K562 (cell line): ENCODE measurements at regions of chr16 and their contacts with region 1.

Region 1: GRCh38 chr16:66894948-66895688 is 14.8 kb downstream of the PDP2 start:
- DNase-seq: peak; percentile 57 to 88 (median 64)
- ATAC-seq: peak; percentile 87
- H3K4me3 ChIP-seq: no peak overlapping the region
- H3K27ac ChIP-seq: no peak overlapping the region
- H3K4me1 ChIP-seq: peaks cover 14 to 23% of the 10 kb centered on the region in 2 experiments
- H3K27me3 ChIP-seq: no peaks in the 10 kb centered on the region
- CTCF ChIP-seq: peak; percentile 95 to 99 (median 96)
- EP300 ChIP-seq: no peak
- POLR2A ChIP-seq: no peak
- RAD21 ChIP-seq: peak; percentile 96 to 98

Region 2: DNA sequence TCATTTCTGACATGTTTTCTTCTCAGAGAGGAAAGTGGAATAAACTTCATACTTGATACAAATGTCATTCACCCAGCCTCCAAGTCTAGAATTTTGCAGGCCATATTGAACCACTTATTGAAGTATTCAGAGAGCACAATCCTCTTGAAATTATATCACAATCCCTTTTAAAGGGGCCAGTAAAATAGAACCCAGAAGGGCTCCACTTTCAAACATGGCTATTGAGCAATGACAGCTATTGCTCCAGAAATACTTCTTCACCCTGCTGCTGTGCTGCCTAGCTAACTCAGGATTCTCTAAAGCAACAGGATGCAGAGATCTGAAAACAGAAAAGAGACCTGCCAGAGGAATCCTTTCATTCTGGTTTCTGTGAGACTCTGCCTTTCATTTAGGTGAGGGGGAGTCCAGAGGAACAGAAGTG is 803.6 kb before region 1 on chr16:
- CTCF ChIA-PET with region 1: no interaction called
- POLR2A ChIA-PET with region 1: no interaction called
- in situ Hi-C with region 1: no loop called
- intact Hi-C with region 1: no loop called
- DNase-seq: no peak
- ATAC-seq: no peak
- H3K4me3 ChIP-seq: no peak overlapping the region
- H3K27ac ChIP-seq: no peak overlapping the region
- H3K4me1 ChIP-seq: no peaks in the 10 kb centered on the region
- H3K27me3 ChIP-seq: no peaks in the 10 kb centered on the region
- CTCF ChIP-seq: no peak
- EP300 ChIP-seq: no peak
- POLR2A ChIP-seq: no peak
- RAD21 ChIP-seq: no peak

Region 3: DNA sequence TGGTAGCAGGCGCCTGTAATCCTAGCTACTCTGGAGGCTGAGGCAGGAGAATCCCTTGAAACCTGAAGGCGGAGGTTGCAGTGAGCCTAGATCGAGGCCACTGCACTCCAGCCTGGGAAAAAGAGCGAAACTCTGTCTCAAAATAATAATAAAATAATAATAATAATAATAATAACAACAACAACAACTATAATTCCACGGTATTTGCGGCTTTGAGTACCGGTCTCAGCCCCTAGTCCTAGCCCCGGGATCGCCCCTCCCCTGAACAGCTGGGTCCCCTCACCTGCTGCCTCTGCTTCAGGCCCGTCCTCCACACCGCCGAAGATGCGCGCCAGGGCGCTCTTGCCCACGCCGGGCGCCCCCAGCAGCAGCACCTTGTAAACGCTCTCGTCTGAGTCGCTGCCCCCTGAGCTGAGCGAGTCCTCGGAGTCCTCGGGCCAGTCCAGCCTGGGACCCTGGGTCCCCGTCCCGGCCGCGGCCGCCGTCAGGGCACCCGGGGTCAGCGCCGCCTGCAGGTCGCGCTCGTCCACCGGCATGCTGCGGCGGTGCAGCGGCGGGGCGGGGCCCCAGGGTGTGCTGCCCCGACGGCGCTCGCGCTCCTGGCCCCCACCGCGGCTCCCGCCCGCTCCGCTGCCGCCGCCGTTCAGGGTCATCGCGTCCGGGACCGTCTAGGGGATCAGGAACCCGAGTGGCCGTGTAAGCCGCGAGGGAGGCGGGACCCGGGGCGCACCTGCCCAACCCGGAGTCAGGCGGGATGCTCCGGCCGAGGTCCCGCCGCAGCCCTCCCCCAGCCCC is 29.6 kb after region 1 on chr16:
- CTCF ChIA-PET with region 1: interaction called, 41 read pairs
- POLR2A ChIA-PET with region 1: interaction called, 15 read pairs
- in situ Hi-C with region 1: no loop called
- intact Hi-C with region 1: loop called (anchors 1 kb)
- DNase-seq: peak; percentile 62 to 92 (median 88)
- ATAC-seq: peak; percentile 93
- H3K4me3 ChIP-seq: peak overlapping the region; percentile 32
- H3K27ac ChIP-seq: no peak overlapping the region
- H3K4me1 ChIP-seq: peaks cover 0 to 31% of the 10 kb centered on the region in 2 experiments; a peak in 3 of 5 replicates
- H3K27me3 ChIP-seq: peaks cover 4 to 45% of the 10 kb centered on the region in 2 experiments; a peak in 2 of 5 replicates
- CTCF ChIP-seq: peak; percentile 52 to 77 (median 66)
- EP300 ChIP-seq: no peak
- POLR2A ChIP-seq: no peak
- RAD21 ChIP-seq: peak in 1 of 2 experiments; percentile 66; a peak in 3 of 4 replicates

Region 4: DNA sequence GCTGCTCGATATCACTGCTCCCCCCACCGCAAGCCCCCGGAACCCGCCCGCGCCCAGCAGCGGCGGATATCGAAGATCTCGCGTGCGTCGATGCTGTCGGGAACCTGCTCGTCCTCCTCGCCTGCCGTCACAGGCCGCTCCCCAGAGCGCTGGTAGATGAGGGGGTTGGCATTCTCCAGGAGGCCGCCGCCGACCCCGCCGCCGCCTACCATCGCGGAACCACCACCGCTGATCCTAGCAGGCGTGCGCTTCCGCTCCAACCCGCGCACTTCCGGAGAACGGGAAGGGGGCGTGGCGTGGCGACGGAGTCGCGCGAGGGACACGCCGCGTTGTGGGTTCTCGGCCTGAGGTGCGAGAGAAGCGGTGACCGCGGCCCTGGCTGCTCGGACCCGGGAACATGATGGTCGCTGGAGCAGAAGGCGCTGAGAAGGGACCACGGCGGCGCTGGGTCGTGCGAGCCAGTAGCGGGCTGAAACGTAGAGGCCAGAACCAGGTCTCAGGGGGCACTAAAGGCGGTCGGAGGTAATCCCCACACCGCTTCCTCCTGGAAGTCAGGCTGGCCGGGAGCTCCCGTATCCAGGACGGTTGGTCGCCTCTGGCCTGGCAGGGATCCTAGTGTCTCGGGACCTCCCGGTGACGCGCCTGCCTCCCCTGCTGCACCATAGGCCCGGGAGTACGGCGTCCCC is 39.2 kb after region 1 on chr16 and contains the start of gene CIAO2B:
- CTCF ChIA-PET with region 1: interaction called, 41 read pairs
- POLR2A ChIA-PET with region 1: interaction called, 4 read pairs
- in situ Hi-C with region 1: loop called (anchors 5 kb)
- intact Hi-C with region 1: no loop called
- DNase-seq: peak; percentile 85 to 93 (median 88)
- ATAC-seq: peak; percentile 87
- H3K4me3 ChIP-seq: peak within 1 kb of the TSS; percentile 99
- H3K27ac ChIP-seq: peak within 1 kb of the TSS; percentile 90
- H3K4me1 ChIP-seq: peaks cover 21 to 47% of the 10 kb centered on the region in 2 experiments
- H3K27me3 ChIP-seq: no peaks in the 10 kb centered on the region
- CTCF ChIP-seq: no peak
- EP300 ChIP-seq: 0 out of 2 replicates have a peak, but pooled peaks have one; percentile 11
- POLR2A ChIP-seq: peak; percentile 86
- RAD21 ChIP-seq: no peak
- polyA plus RNA-seq, gene CIAO2B: 104 to 122 TPM

Region 5: GRCh38 chr16:66947302-66948065 is 52.4 kb after region 1 on chr16:
- CTCF ChIA-PET with region 1: interaction called, 4 read pairs
- POLR2A ChIA-PET with region 1: no interaction called
- in situ Hi-C with region 1: no loop called
- intact Hi-C with region 1: loop called (anchors 5 kb)
- DNase-seq: peak; percentile 81 to 89 (median 86)
- ATAC-seq: peak; percentile 94
- H3K4me3 ChIP-seq: no peak overlapping the region
- H3K27ac ChIP-seq: no peak overlapping the region
- H3K4me1 ChIP-seq: peaks cover 0 to 16% of the 10 kb centered on the region in 2 experiments; a peak in 1 of 5 replicates
- H3K27me3 ChIP-seq: no peaks in the 10 kb centered on the region
- CTCF ChIP-seq: peak; percentile 76 to 94 (median 92)
- EP300 ChIP-seq: no peak
- POLR2A ChIP-seq: no peak
- RAD21 ChIP-seq: peak; percentile 72 to 83